GM12878 (cell line): ENCODE measurements at regions of chr15 and their contacts with region 1.

Region 1: DNA sequence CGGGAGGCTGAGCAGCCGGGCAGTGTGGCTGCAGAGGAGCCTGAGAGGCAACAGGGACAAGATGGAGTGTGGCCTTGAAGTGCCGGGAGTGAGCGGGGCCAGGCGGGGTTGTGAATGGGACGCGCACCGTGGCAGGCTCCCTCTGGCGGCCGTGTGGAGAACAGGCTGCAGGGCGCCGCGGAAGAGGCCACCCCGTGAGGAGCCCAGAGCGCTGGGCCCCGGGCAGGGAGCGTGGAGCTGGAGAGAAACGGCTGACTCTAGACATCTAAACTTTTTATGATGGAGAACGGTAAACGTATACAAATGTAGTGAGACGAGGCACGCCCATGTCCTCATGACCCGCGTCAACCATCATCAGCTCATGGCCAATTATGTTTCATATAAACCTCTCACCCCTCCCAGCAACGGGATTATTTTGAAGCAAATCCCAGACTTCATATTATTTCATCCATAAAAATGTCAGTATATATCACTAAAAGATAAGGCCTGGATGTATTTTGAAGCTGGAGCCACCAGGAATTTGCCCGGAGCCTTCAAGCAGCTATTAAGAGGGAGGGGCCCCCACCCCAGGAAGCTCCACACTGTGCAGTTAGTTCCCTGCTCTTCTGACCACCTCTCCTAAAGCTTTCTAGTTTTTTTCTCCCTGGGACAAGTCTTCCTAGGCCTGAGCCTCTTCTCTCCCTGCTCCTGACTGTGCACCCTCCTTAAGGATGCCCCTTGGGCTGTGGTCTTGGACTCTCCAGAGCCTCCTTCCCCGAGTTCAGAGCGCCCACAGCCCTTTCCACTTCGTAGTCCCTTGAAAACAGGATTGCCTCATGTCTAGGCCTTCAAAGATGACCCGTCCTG is 149.4 kb downstream of the SMAD6 start:
- DNase-seq: no peak
- ATAC-seq: peak; percentile 99
- H3K4me3 ChIP-seq: no peak overlapping the region
- H3K27ac ChIP-seq: no peak overlapping the region
- H3K4me1 ChIP-seq: no peaks in the 10 kb centered on the region
- H3K27me3 ChIP-seq: no peaks in the 10 kb centered on the region
- CTCF ChIP-seq: peak; percentile 85 to 98 (median 90)
- EP300 ChIP-seq: no peak
- POLR2A ChIP-seq: no peak
- RAD21 ChIP-seq: peak; percentile 67

Region 2: DNA sequence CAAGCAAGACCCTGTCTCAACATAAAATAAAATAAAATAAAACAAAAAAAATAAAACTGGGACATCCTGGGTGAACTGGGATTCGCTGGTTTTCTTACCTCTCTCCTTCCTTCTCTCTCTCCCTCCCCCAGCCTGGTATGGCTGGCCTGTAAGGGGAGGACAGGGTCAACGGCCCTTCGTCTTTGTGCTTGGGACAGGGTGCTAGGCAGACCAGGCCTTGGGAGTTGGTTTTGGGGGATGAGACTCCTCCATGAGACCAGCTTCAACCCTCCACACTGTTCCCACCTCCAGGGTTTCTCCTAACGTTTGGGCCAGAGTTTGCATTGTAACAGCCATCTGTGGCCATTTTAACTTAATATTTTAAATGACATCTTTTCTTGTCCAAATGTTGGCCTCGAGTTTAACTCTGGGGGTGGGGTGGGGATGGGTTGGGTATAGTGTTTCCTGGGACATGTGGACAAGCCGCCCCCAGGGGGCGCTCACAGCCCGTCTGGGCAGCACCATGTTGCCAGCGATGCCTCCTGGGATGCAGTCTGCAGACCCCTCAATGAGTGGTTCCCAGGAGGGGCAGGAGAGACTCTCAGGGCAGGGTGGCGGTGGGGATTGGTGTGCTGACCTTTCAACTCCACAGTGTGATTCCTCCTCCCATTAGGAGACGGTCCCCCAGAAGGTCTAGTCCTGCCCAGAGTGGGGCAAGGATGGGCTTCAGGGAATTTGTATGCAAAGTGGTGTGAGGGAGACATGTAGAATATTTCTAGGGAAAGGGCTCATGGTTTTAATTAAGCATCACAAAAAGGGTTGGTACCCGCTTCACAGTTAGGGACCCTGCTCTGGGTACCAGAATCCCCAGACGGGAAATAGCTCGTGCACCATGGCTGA is 247.9 kb before region 1 on chr15:
- CTCF ChIA-PET with region 1: interaction called, 37 read pairs
- POLR2A ChIA-PET with region 1: no interaction called
- RAD21 ChIA-PET with region 1: interaction called, 20 read pairs
- SMC1A ChIA-PET with region 1: interaction called, 14 read pairs
- in situ Hi-C with region 1: loop called (anchors 10 kb)
- intact Hi-C with region 1: loop called (anchors 1 kb)
- DNase-seq: no peak
- ATAC-seq: peak; percentile 98
- H3K4me3 ChIP-seq: no peak overlapping the region
- H3K27ac ChIP-seq: no peak overlapping the region
- H3K4me1 ChIP-seq: no peaks in the 10 kb centered on the region
- H3K27me3 ChIP-seq: no peaks in the 10 kb centered on the region; a peak in 1 of 4 replicates
- CTCF ChIP-seq: peak; percentile 76 to 91 (median 86)
- EP300 ChIP-seq: no peak
- POLR2A ChIP-seq: no peak
- RAD21 ChIP-seq: peak; percentile 80

Region 3: GRCh38 chr15:66619151-66619903 is 232.1 kb before region 1 on chr15:
- CTCF ChIA-PET with region 1: interaction called, 32 read pairs
- POLR2A ChIA-PET with region 1: no interaction called
- RAD21 ChIA-PET with region 1: interaction called, 18 read pairs
- SMC1A ChIA-PET with region 1: interaction called, 11 read pairs
- in situ Hi-C with region 1: no loop called
- intact Hi-C with region 1: loop called (anchors 5 kb)
- DNase-seq: no peak
- ATAC-seq: peak; percentile 94
- H3K4me3 ChIP-seq: no peak overlapping the region
- H3K27ac ChIP-seq: no peak overlapping the region
- H3K4me1 ChIP-seq: peaks cover 3% of the 10 kb centered on the region; the same call in 1 of the 2 replicates
- H3K27me3 ChIP-seq: peaks cover 0 to 6% of the 10 kb centered on the region in 2 experiments; a peak in 2 of 4 replicates
- CTCF ChIP-seq: peak; percentile 78 to 90 (median 81)
- EP300 ChIP-seq: no peak
- POLR2A ChIP-seq: no peak
- RAD21 ChIP-seq: peak; percentile 66

Region 4: GRCh38 chr15:66774001-66774814 is 77.2 kb before region 1 on chr15:
- CTCF ChIA-PET with region 1: interaction called, 5 read pairs
- POLR2A ChIA-PET with region 1: no interaction called
- RAD21 ChIA-PET with region 1: interaction called, 4 read pairs
- SMC1A ChIA-PET with region 1: interaction called, 3 read pairs
- in situ Hi-C with region 1: no loop called
- intact Hi-C with region 1: loop called (anchors 2 kb)
- DNase-seq: no peak
- ATAC-seq: peak; percentile 98
- H3K4me3 ChIP-seq: no peak overlapping the region
- H3K27ac ChIP-seq: no peak overlapping the region
- H3K4me1 ChIP-seq: no peaks in the 10 kb centered on the region
- H3K27me3 ChIP-seq: no peaks in the 10 kb centered on the region
- CTCF ChIP-seq: peak; percentile 66 to 87 (median 82)
- EP300 ChIP-seq: no peak
- POLR2A ChIP-seq: no peak
- RAD21 ChIP-seq: peak; percentile 75

Region 5: DNA sequence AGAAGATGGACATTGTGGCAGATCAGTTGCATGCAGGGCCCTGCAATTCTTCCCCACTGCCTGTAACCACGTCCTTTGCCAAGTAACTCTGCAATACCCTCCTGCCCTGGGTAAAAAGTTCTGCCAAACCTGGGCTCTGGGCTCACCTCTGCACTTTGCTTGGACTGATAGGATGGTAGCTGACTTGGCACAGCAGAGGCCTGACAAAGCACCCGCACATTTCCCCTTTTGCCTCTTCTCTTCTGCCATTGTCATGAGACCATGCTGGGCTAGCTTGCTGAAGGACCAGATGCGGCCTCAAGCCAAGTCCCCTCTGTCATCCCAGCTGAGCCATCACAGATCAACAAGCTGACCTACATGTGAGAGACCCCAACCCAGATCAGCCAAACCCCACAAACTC is 27.0 kb before region 1 on chr15:
- CTCF ChIA-PET with region 1: interaction called, 12 read pairs
- POLR2A ChIA-PET with region 1: no interaction called
- RAD21 ChIA-PET with region 1: interaction called, 3 read pairs
- SMC1A ChIA-PET with region 1: no interaction called
- in situ Hi-C with region 1: no loop called
- intact Hi-C with region 1: no loop called
- DNase-seq: no peak
- ATAC-seq: no peak
- H3K4me3 ChIP-seq: no peak overlapping the region
- H3K27ac ChIP-seq: no peak overlapping the region
- H3K4me1 ChIP-seq: no peaks in the 10 kb centered on the region
- H3K27me3 ChIP-seq: no peaks in the 10 kb centered on the region; a peak in 1 of 4 replicates
- CTCF ChIP-seq: no peak
- EP300 ChIP-seq: no peak
- POLR2A ChIP-seq: no peak
- RAD21 ChIP-seq: no peak

Region 6: DNA sequence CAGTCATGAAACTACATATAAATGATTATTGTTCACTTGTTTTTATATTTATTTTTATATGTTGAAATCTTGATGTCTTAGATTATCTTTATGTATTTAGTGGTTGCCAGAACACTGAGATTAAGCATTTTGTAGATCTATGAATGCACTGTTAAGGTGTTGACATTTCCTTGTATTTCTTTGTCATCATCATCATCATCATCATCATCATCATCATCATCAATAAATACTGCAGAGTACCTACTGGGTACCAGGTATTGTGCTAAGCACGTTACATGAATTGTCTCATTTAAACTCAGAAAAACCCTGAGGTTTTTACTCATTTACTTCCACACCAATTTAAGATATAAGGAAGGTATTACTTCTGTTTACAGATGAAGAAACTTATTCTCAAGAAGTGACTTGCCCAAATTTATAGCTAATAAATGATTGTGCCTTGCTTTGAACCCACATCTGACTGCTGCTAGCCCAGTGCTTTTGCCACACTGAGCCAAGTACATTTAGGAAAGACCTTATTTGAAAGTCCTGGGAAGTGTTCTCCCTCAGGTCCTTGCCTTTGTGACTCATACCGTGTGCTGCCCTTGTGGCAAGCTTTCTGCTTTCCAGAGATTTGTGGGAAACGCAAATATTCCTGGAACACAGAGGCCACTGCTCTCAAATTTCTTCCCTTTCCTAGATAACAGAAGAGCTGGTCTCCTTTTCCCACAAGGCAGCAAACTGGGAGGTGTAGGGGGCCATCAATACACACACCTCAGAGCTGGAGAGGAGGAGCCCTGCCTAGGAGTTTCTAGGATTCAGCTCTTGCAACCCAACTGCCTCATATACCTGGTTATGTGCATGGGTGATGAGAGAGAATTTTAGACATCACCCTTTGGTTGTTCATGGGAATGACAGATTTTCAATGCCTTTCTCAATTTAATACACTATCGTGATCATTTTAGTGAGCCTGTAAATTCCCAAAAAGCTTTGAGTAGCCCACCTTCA is 554.1 kb after region 1 on chr15:
- CTCF ChIA-PET with region 1: no interaction called
- POLR2A ChIA-PET with region 1: no interaction called
- RAD21 ChIA-PET with region 1: no interaction called
- SMC1A ChIA-PET with region 1: no interaction called
- in situ Hi-C with region 1: no loop called
- intact Hi-C with region 1: no loop called
- DNase-seq: no peak
- ATAC-seq: no peak
- H3K4me3 ChIP-seq: no peak overlapping the region
- H3K27ac ChIP-seq: no peak overlapping the region
- H3K4me1 ChIP-seq: no peaks in the 10 kb centered on the region
- H3K27me3 ChIP-seq: no peaks in the 10 kb centered on the region; a peak in 1 of 4 replicates
- CTCF ChIP-seq: no peak
- EP300 ChIP-seq: no peak
- POLR2A ChIP-seq: no peak
- RAD21 ChIP-seq: no peak